ENCODE measurements at regions of chr2 and their contacts with region 1.

Region 1: DNA sequence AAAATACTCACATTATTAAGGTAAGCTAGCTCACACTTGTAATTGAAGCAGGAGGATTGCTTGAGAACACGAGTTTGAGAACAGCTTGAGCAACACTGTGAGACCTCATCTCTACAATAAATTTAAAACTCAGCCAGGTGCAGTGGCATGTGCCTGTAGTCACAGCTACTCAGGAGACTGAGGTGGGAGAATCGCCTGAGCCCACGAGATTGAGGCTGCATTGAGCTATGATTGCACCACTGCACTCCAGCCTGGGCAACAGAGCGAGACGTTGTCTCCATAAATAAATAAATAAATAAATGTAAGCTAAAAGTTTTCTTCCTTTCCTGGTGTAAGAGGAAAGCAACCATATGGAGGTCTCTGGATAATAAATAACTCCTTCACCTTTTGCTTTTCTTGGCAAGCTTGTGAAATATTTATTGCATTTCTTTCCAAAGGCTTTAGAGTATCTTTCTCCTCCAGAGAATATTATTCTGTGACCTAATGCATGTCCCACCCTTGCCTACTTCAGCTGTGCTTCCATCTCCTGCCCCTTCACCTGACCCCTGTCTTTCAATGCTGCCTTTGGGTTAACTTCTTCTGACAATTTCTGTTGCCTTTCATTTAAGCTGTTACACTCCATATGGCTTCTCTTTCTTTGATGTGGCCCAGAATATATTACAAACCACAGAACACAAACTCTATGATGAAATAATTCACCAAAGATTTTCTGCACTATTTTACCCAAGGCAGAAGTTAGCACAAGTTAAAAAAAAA is 280.7 kb upstream of the RND3 start:
- DNase-seq: no peak
- H3K4me3 ChIP-seq: no peak overlapping the region
- H3K27ac ChIP-seq: no peak overlapping the region
- H3K4me1 ChIP-seq: no peaks in the 10 kb centered on the region
- H3K27me3 ChIP-seq: no peaks in the 10 kb centered on the region
- CTCF ChIP-seq: no peak

Region 2: DNA sequence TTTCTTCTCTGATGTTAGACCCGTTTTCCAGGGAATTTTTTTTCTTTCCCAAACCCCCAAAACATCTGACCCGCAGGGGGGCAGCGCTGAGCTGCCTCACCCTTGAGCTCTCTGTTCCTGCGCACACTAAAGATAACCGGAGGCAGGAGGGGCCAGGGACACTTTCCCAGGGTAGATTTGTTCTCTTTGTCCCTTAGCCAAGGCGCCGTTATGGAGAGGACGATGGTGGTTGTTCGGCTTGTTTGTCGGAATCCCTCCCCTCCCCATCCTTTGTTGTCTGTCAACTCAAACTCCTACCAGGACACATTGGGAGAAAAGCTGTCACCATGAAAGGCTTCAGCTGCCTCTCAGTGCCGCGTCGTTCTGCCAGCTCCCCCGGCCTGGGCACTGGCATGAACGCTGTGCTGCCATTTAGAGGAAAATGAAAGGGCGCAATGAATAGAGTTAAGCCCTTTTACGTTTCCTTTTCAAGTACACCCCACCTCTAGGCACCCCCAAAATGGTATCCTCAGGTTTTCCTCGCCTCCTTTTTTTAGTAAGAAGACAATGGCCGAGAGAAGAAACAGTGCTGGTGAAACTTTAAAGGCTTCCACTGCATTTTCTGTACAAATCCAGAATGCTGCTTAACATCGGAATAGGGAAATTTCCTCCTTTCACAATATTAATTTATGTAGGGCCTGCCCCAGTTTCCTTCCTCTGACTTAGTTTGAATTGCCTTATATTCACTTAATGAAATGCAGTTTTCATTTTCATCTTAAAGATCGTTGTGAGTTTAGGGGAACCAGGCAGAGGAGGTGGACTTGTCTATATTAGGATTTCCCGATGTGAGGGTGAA is 342.8 kb before region 1 on chr2:
- CTCF ChIA-PET with region 1: no interaction called
- dilution Hi-C with region 1: no loop called
- in situ Hi-C with region 1: no loop called
- intact Hi-C with region 1: no loop called
- DNase-seq: no peak
- H3K4me3 ChIP-seq: no peak overlapping the region
- H3K27ac ChIP-seq: no peak overlapping the region
- H3K4me1 ChIP-seq: no peaks in the 10 kb centered on the region
- H3K27me3 ChIP-seq: no peaks in the 10 kb centered on the region
- CTCF ChIP-seq: peak; percentile 18 to 39

Region 3: GRCh38 chr2:150750720-150751119 is 17.4 kb before region 1 on chr2:
- CTCF ChIA-PET with region 1: interaction called, 21 read pairs
- dilution Hi-C with region 1: no loop called
- in situ Hi-C with region 1: no loop called
- intact Hi-C with region 1: no loop called
- DNase-seq: peak; percentile 19
- H3K4me3 ChIP-seq: no peak overlapping the region
- H3K27ac ChIP-seq: no peak overlapping the region
- H3K4me1 ChIP-seq: no peaks in the 10 kb centered on the region
- H3K27me3 ChIP-seq: no peaks in the 10 kb centered on the region
- CTCF ChIP-seq: no peak